ENCODE measurements at regions of chr17 and their contacts with region 1.

Region 1: DNA sequence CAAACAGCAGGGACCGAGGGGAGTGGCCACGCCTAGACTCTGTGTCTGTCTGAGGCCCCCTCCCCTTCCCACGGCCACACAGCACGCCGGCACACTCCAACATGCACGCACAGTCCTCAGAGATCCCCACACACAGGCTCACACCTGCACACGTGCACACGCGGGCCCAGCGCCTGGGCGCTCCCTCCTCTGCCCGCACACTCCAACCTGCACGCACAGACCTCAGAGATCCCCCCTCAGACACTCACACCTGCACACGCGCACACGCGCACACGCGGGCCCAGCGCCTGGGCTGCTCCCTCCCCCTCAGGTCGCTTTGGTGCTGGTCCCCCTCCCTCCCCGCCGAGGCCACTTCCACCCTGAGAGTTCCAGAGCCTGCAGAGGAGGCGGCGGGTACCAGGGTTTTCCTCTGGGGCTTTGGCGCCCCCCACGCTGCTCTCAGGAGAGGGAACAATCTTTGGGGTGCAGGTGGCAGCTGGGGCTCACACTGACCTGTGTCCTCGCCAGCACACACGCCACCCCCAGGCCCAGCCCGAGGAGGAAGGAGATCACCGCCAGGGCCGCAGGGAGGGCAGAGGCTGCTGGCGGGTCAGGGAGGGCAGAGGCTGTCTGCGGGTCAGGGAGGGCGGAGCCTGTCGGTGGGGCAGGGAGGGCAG is 1.6 kb downstream of the CD7 start:
- DNase-seq: peak in 8 of 9 donors; percentile 48 to 72 (median 65)
- ATAC-seq: peak; percentile 63
- H3K4me3 ChIP-seq: peak overlapping the region; percentile 91
- H3K4me3 Mint-ChIP-seq: peak overlapping the region in 6 of 10 donors; percentile 88 to 99 (median 97)
- H3K27ac ChIP-seq: peak overlapping the region; percentile 91
- H3K27ac Mint-ChIP-seq: peak overlapping the region in 6 of 9 donors; percentile 77 to 97 (median 90)
- H3K4me1 ChIP-seq: peaks cover 10 to 13% of the 10 kb centered on the region in 2 donors
- H3K4me1 Mint-ChIP-seq: peaks cover 10 to 19% (median 15%) of the 10 kb centered on the region in 7 donors
- H3K27me3 ChIP-seq: no peaks in the 10 kb centered on the region
- H3K27me3 Mint-ChIP-seq: no peaks in the 10 kb centered on the region

Region 2: GRCh38 chr17:82205719-82206508 is 109.9 kb before region 1 on chr17:
- CTCF ChIA-PET with region 1: interaction called, 3 read pairs
- POLR2A ChIA-PET with region 1: interaction called, 10 read pairs
- intact Hi-C with region 1: loop called in 1 of 2 experiments (anchors 1 kb)
- DNase-seq: peak; percentile 67 to 87 (median 82)
- ATAC-seq: peak; percentile 88
- H3K4me3 ChIP-seq: no peak overlapping the region
- H3K4me3 Mint-ChIP-seq: peak overlapping the region in 9 of 10 donors; percentile 45 to 71 (median 58)
- H3K27ac ChIP-seq: peak overlapping the region; percentile 64
- H3K27ac Mint-ChIP-seq: peak overlapping the region; percentile 87 to 98 (median 95)
- H3K4me1 ChIP-seq: peaks cover 14 to 22% of the 10 kb centered on the region in 2 donors
- H3K4me1 Mint-ChIP-seq: peaks cover 24 to 61% (median 43%) of the 10 kb centered on the region in 7 donors
- H3K27me3 ChIP-seq: no peaks in the 10 kb centered on the region
- H3K27me3 Mint-ChIP-seq: no peaks in the 10 kb centered on the region

Region 3: DNA sequence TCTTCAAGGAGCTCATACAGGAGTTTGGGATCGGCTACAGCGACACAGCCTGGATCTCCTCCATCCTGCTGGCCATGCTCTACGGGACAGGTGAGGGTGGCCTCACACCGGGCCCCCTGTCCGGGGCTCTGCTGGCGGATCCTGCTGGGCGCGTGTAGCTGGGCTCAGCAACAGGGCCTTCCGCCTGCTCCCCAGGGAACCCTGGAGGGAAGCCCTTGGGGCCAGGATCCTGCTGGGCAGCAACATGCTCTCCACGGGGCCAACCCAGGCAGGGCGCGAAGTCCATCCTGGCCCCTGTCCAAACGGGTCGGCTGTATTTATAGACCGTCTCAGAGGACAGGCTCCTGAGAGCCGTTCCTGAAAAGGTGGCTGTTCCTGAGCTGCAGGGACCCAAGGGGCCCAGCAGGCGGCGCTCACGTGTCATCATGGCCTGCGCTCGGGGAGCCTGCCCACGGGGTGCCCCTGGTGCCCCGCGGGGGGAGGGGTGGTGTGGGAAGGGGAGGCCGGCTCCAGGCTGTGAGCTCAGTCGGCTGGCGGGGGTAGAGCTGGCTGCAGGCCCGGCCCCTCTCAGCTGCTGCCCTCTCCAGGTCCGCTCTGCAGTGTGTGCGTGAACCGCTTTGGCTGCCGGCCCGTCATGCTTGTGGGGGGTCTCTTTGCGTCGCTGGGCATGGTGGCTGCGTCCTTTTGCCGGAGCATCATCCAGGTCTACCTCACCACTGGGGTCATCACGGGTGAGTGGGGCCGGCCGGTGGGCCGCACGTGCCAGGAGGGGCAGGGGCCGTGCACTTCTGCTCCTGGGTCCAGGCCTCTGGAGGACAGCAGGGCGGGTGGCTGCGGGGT is 79.5 kb before region 1 on chr17:
- CTCF ChIA-PET with region 1: interaction called, 10 read pairs
- POLR2A ChIA-PET with region 1: interaction called, 11 read pairs
- intact Hi-C with region 1: loop called (anchors 1 kb)
- DNase-seq: peak; percentile 58 to 77 (median 71)
- ATAC-seq: peak; percentile 66
- H3K4me3 ChIP-seq: no peak overlapping the region
- H3K4me3 Mint-ChIP-seq: peak overlapping the region in 1 of 10 donors; percentile 17
- H3K27ac ChIP-seq: peak overlapping the region; percentile 46
- H3K27ac Mint-ChIP-seq: peak overlapping the region in 5 of 9 donors; percentile 23 to 82 (median 51)
- H3K4me1 ChIP-seq: peaks cover 10 to 47% of the 10 kb centered on the region in 2 donors
- H3K4me1 Mint-ChIP-seq: peaks cover 5 to 47% (median 33%) of the 10 kb centered on the region in 7 donors
- H3K27me3 ChIP-seq: no peaks in the 10 kb centered on the region
- H3K27me3 Mint-ChIP-seq: no peaks in the 10 kb centered on the region

Region 4: GRCh38 chr17:82292251-82293154 is 23.3 kb before region 1 on chr17:
- CTCF ChIA-PET with region 1: interaction called, 61 read pairs
- POLR2A ChIA-PET with region 1: interaction called, 237 read pairs
- intact Hi-C with region 1: no loop called
- DNase-seq: peak; percentile 76 to 94 (median 91)
- ATAC-seq: peak; percentile 95
- H3K4me3 ChIP-seq: peak overlapping the region; percentile 72
- H3K4me3 Mint-ChIP-seq: peak overlapping the region; percentile 83 to 94 (median 91)
- H3K27ac ChIP-seq: peak overlapping the region; percentile 99
- H3K27ac Mint-ChIP-seq: peak overlapping the region; percentile 86 to 96 (median 92)
- H3K4me1 ChIP-seq: peaks cover 18 to 21% of the 10 kb centered on the region in 2 donors
- H3K4me1 Mint-ChIP-seq: peaks cover 14 to 54% (median 43%) of the 10 kb centered on the region in 7 donors
- H3K27me3 ChIP-seq: no peaks in the 10 kb centered on the region
- H3K27me3 Mint-ChIP-seq: no peaks in the 10 kb centered on the region

Region 5: DNA sequence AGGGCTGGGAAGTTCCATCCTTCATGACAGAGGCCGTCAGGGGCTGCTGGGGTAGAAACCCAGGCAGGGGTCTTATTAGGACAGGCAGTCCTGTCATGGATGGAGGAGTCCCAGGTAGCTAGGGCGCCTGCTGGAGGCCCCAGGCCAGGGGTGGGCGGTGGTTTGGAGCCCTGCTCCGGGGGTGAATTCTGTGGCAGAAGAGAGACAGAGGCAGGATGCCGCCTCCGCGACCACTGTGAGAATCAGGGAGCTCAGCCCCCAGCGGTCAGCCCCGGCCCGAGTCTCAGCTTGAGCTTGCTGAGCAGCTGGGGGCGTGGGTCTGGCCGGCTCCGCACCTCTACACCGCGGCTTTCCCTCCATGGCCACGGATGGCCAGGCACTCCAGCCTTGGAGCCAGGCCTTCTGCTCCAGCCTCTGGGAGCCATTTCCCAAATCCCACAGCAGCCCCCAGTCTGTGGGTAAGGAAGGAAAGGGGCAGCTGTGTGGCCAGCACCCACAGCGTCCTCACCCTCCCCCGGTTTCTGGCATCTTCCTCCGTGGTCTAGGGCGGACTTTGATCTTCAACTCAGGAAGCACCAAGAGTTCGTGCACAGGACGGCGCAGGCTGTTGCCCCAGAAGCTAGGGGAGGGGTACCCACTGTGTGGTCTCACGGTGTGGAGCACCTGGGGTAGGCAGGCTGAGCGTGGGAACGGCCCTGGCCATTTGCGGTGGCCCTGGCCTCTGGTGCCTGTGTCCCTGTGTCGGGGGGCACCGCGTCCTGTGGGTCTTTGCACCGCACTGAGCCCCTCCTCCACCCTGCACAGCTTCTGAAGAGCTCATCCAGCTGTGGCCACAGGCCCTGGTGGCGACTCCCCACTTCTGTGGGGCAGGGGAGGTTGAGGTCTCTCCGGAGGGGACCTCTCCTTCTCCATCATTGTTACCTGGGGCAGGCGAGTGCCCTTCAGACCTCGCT is 12.6 kb before region 1 on chr17:
- CTCF ChIA-PET with region 1: interaction called, 61 read pairs
- POLR2A ChIA-PET with region 1: interaction called, 237 read pairs
- intact Hi-C with region 1: loop called (anchors 1 kb)
- DNase-seq: peak in 8 of 9 donors; percentile 50 to 59 (median 54)
- ATAC-seq: peak; percentile 60
- H3K4me3 ChIP-seq: peak overlapping the region; percentile 67
- H3K4me3 Mint-ChIP-seq: peak overlapping the region; percentile 83 to 98 (median 90)
- H3K27ac ChIP-seq: peak overlapping the region; percentile 98
- H3K27ac Mint-ChIP-seq: peak overlapping the region; percentile 80 to 100 (median 100)
- H3K4me1 ChIP-seq: peaks cover 57 to 67% of the 10 kb centered on the region in 2 donors
- H3K4me1 Mint-ChIP-seq: peaks cover 25 to 87% (median 67%) of the 10 kb centered on the region in 7 donors
- H3K27me3 ChIP-seq: no peaks in the 10 kb centered on the region
- H3K27me3 Mint-ChIP-seq: no peaks in the 10 kb centered on the region

Region 6: DNA sequence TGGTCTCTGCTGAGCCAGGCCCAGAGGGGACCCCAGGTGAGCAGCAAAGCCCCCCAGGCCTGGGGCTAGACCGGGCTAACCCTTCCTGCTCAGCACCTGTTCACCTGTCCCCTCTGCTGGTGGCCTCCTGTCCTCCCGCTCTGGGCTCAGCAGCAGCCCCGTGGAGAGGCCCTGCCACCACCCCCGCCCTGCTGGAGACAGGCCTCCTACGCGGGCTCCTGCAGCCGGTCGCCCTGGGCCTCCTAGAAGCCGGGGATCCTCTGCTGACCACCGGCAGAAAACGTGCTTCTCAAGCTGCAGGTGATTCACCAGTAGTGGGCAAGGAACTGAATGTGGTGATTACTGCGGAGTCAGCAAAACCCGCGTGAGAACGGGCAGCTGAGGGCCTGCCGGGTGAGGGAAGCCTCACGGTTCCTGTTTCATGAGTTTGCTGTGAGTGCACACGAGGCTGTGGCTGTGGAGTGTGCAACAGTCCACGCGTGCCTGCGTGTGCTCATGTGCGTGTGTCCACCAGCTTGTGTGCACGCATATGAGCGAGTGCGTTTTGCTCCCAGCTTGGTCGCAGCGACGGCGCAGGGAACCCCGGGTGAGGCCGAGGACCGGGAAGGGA is 16.9 kb after region 1 on chr17:
- CTCF ChIA-PET with region 1: interaction called, 3 read pairs
- POLR2A ChIA-PET with region 1: interaction called, 3 read pairs
- intact Hi-C with region 1: loop called in 1 of 2 experiments (anchors 2 kb)
- DNase-seq: peak in 2 of 9 donors; percentile 26 to 32
- ATAC-seq: peak; percentile 78
- H3K4me3 ChIP-seq: peak overlapping the region; percentile 60
- H3K4me3 Mint-ChIP-seq: peak overlapping the region; percentile 80 to 93 (median 90)
- H3K27ac ChIP-seq: peak overlapping the region; percentile 32
- H3K27ac Mint-ChIP-seq: peak overlapping the region in 7 of 9 donors; percentile 48 to 86 (median 79)
- H3K4me1 ChIP-seq: peaks cover 15 to 17% of the 10 kb centered on the region in 2 donors
- H3K4me1 Mint-ChIP-seq: peaks cover 16 to 33% (median 24%) of the 10 kb centered on the region in 7 donors
- H3K27me3 ChIP-seq: no peaks in the 10 kb centered on the region
- H3K27me3 Mint-ChIP-seq: peaks cover 0 to 6% (median 0%) of the 10 kb centered on the region in 5 donors

Region 7: GRCh38 chr17:82494236-82495055 is 178.6 kb after region 1 on chr17:
- CTCF ChIA-PET with region 1: no interaction called
- POLR2A ChIA-PET with region 1: no interaction called
- intact Hi-C with region 1: no loop called
- DNase-seq: peak; percentile 68 to 92 (median 80)
- ATAC-seq: peak; percentile 80
- H3K4me3 ChIP-seq: no peak overlapping the region
- H3K4me3 Mint-ChIP-seq: peak overlapping the region in 9 of 10 donors; percentile 14 to 84 (median 65)
- H3K27ac ChIP-seq: peak overlapping the region; percentile 28
- H3K27ac Mint-ChIP-seq: peak overlapping the region; percentile 77 to 94 (median 87)
- H3K4me1 ChIP-seq: peaks cover 0 to 9% of the 10 kb centered on the region in 2 donors
- H3K4me1 Mint-ChIP-seq: peaks cover 8 to 33% (median 25%) of the 10 kb centered on the region in 7 donors
- H3K27me3 ChIP-seq: no peaks in the 10 kb centered on the region
- H3K27me3 Mint-ChIP-seq: peaks cover 0 to 2% (median 0%) of the 10 kb centered on the region in 5 donors

Measured in naive thymus-derived CD4-positive, alpha-beta T cell (primary cell).